ENCODE measurements at regions of chr7 and their contacts with region 1.

Region 1: GRCh38 chr7:50664461-50664922 is 99.3 kb upstream of the DDC start:
- DNase-seq: no peak
- ATAC-seq: no peak
- H3K4me3 ChIP-seq: no peak overlapping the region
- H3K27ac ChIP-seq: no peak overlapping the region
- H3K4me1 ChIP-seq: no peaks in the 10 kb centered on the region
- H3K27me3 ChIP-seq: no peaks in the 10 kb centered on the region
- CTCF ChIP-seq: no peak
- EP300 ChIP-seq: no peak
- POLR2A ChIP-seq: no peak
- RAD21 ChIP-seq: no peak

Region 2: DNA sequence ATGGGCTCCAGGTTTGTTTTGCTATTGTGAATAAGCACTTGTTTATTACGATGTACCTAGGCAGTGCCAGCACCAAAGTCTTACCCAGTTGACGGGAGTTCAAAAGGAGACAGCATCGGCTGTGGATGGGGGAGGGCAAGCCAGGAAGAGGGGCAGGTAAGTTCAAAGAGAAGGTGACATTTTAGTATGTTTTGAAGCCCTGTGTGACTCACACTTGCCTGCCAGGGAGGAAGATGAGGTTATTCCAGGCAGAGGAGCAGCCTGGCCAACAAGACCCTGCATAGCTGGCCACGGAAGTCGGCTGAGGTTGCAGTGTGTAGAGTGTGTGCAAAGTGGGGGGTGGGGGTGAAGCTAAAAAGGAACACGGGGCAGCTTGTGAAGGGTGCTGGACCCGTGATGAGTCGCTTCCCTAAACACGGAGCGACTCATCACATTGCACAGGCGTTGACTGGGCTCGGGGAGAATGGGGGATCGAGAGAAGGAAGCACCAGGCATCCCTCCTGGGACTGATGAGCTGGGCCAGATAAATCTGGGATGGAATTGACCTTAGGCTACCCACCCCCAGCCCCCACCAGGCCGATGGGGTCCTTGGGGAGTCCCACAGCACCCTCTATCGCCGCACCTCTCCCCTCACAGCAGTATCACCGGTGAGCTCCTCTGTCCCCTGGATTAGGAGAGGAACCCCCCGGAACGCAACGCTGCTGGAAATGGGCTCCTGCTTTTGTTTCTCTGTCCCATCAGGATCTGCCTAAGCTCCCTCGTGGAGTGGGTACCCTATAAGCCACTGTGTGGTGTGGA is 457.8 kb before region 1 on chr7:
- CTCF ChIA-PET with region 1: no interaction called
- POLR2A ChIA-PET with region 1: no interaction called
- in situ Hi-C with region 1: loop called (anchors 10 kb)
- intact Hi-C with region 1: no loop called
- DNase-seq: peak; percentile 40
- ATAC-seq: no peak; the same call in 1 of the 3 replicates
- H3K4me3 ChIP-seq: no peak overlapping the region
- H3K27ac ChIP-seq: no peak overlapping the region
- H3K4me1 ChIP-seq: peaks cover 19% of the 10 kb centered on the region
- H3K27me3 ChIP-seq: peaks cover 0 to 8% of the 10 kb centered on the region in 2 experiments; a peak in 1 of 5 replicates
- CTCF ChIP-seq: no peak
- EP300 ChIP-seq: no peak
- POLR2A ChIP-seq: no peak
- RAD21 ChIP-seq: no peak

Region 3: GRCh38 chr7:50544992-50545391 is 119.5 kb before region 1 on chr7:
- CTCF ChIA-PET with region 1: no interaction called
- POLR2A ChIA-PET with region 1: no interaction called
- in situ Hi-C with region 1: no loop called
- intact Hi-C with region 1: no loop called
- DNase-seq: peak; percentile 50
- ATAC-seq: peak; percentile 69
- H3K4me3 ChIP-seq: no peak overlapping the region
- H3K27ac ChIP-seq: no peak overlapping the region
- H3K4me1 ChIP-seq: no peaks in the 10 kb centered on the region
- H3K27me3 ChIP-seq: no peaks in the 10 kb centered on the region
- CTCF ChIP-seq: no peak
- EP300 ChIP-seq: no peak
- POLR2A ChIP-seq: no peak
- RAD21 ChIP-seq: no peak

Region 4: DNA sequence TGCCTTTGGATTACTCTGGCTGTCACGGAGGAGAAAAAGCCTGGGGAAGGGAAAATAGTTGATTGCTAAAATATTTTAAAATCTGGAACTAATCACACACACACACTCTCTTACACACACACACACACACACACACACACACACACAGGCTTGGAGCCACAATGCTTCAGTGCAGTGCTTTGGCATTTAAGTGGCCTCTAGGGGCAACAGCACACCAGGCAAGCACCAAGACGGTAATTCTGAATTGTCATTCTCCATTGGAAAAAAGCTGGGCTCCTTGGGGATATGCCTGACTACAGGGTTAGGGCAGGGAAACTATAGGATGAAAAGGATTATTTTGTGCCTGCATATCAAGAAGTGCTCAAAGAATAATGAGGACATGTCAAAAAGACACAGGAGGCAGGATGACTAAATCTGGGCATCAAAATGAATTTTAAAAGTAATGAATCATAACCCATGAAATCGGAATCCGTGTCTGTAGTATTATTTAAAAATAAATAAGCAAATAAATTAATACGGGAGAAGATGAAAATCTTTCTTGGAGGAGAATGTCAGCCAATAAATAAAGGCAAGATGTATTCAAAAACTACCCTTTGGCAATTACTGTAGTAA is 68.9 kb before region 1 on chr7:
- CTCF ChIA-PET with region 1: no interaction called
- POLR2A ChIA-PET with region 1: no interaction called
- in situ Hi-C with region 1: no loop called
- intact Hi-C with region 1: no loop called
- DNase-seq: peak; percentile 35
- ATAC-seq: peak; percentile 65
- H3K4me3 ChIP-seq: no peak overlapping the region
- H3K27ac ChIP-seq: peak overlapping the region; percentile 12
- H3K4me1 ChIP-seq: peaks cover 64% of the 10 kb centered on the region
- H3K27me3 ChIP-seq: no peaks in the 10 kb centered on the region
- CTCF ChIP-seq: peak; percentile 77
- EP300 ChIP-seq: no peak
- POLR2A ChIP-seq: no peak
- RAD21 ChIP-seq: peak; percentile 49

Region 5: DNA sequence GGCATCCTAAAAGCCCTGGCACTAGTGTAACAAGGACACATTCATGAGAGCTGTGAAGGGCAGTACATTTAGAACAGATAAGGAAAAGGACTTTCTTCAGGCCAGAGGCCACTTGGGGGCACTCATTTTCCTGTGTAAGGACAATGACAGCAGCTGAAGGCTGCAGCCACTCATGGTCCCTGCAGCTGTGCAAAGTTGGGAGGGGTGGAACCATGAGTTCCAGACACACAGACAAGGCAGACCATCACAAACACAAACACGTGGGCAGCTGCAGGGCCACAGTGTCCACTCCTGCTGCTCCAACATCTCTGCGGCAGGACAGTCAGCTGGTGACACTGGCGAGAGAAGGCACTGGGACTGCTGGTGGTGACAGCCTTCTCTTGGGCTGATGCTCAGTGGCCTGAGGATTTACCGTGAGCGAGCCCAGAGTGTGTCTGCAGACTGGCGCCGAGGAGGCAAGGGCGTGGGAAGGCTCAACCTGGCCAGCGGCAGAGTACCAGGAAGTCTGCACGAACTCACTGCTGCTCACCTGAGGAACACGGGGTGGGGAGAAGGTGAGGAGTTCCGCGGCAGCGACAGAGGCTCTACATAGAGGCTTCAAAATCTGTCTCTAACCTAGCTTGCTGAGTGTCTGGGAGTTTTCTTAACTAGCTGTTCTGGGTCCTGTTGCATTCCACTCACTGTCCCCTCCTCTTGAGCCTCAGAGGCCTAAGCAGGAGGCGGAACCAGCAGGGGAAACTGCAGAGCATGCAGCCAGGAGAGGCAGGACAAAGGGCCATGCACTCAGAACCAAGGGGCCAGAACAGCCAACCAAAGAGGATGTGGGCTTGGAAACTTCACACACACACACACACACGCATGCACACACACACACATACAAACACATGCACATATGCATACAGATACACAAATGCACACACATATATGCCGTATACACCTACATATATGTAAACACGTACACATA is 22.8 kb before region 1 on chr7:
- CTCF ChIA-PET with region 1: no interaction called
- POLR2A ChIA-PET with region 1: no interaction called
- in situ Hi-C with region 1: no loop called
- intact Hi-C with region 1: no loop called
- DNase-seq: peak; percentile 18
- ATAC-seq: peak; percentile 86
- H3K4me3 ChIP-seq: no peak overlapping the region
- H3K27ac ChIP-seq: no peak overlapping the region
- H3K4me1 ChIP-seq: peaks cover 16% of the 10 kb centered on the region
- H3K27me3 ChIP-seq: no peaks in the 10 kb centered on the region
- CTCF ChIP-seq: peak; percentile 66
- EP300 ChIP-seq: no peak
- POLR2A ChIP-seq: no peak
- RAD21 ChIP-seq: no peak